Mammary epithelial cell (primary cell): ENCODE measurements at regions of chr18 and their contacts with region 1.

Region 1: DNA sequence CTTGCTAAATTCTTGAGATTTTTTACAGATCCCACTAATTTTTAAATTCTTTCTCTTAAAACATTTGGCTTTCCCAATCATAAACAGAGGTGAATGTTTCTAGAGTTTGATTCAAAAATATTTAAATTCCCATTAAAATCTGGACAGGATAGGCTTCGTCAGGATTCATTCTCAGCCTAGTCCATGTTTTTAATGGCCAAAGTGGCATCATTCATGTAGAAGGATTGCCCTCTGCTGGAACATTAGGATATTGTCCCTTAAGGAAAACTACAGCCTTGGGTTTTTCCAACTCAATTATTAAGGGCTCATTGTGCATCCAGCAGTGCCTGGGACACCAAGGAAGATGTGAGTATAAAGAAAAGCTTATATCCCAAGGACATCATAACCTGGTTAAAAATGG is 71.7 kb downstream of the TPGS2 start:
- DNase-seq: peak; percentile 40
- H3K4me3 ChIP-seq: no peak overlapping the region
- H3K27ac ChIP-seq: no peak overlapping the region
- H3K4me1 ChIP-seq: peaks cover 7% of the 10 kb centered on the region
- H3K27me3 ChIP-seq: no peaks in the 10 kb centered on the region
- CTCF ChIP-seq: peak; percentile 63 to 73

Region 2: DNA sequence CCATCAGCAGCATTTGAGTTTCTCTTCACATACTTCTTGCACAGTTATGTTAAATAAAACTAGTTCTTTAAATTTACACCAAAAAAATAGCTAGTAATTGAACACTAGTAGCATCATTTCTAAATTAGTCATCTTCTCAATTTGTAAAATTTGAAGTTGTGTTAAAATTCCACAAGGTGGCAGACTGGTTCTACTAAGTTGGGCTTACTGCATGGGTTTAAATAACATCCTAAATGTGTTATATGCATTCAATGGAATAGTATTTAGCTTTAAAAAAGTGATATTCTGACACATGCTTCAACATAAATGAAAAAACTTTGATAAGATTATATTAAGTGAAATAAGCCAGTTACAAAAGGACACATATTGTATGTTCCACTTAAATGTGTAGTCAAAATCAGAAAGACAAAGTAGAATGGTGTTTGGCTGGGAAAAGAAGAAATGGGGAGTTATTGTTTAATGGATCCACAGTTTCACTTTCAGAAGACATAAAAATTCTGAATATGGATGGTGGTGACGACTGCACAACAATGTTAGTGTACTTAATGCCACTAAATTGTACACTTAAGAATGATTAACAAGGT is 661.1 kb before region 1 on chr18:
- CTCF ChIA-PET with region 1: no interaction called
- dilution Hi-C with region 1: no loop called
- in situ Hi-C with region 1: no loop called
- intact Hi-C with region 1: loop called (anchors 10 kb)
- DNase-seq: peak; percentile 56
- H3K4me3 ChIP-seq: no peak overlapping the region
- H3K27ac ChIP-seq: no peak overlapping the region
- H3K4me1 ChIP-seq: no peaks in the 10 kb centered on the region
- H3K27me3 ChIP-seq: no peaks in the 10 kb centered on the region
- CTCF ChIP-seq: peak; percentile 47 to 58

Region 3: DNA sequence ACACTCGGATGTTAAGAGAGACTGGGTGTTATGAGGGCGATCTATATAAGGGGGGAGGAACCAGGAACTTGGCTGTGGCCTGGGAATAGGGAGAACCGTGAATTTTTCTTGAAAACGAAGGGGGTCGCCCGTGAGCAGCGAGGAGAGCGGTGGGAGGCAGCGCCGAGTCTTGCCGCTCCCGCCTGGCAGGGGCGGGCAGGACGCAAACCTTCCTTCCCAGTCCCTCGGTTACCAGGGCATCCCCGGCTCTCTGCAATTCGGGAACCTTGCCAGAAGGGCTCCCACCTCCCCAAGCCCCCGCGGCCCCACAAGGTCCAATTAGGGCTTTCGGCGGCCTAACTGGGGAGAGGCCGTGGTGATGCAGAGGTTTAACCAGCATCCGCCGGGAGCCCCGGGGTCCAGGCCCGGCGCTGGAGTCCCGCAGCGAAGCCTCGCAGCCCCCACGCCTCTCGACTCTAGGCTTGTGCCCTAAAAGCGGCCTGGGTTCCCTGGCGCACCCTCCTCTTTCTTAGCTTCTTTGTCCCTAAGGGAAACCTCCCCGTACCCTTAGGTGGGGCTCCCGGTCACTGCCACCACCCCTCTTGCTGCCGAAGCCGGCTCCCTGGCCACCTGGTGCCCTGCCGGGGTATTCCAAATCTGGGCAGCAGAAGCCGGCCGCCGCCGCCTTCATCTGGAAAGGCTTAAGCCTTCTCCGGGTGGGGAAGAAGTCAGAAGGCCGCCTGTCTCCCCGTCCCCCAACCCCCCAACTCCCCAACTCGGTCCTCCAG is 460.2 kb before region 1 on chr18:
- CTCF ChIA-PET with region 1: no interaction called
- dilution Hi-C with region 1: no loop called
- in situ Hi-C with region 1: no loop called
- intact Hi-C with region 1: loop called (anchors 5 kb)
- DNase-seq: peak; percentile 57
- H3K4me3 ChIP-seq: peak overlapping the region; percentile 47 to 78 (median 78)
- H3K27ac ChIP-seq: peak overlapping the region; percentile 26
- H3K4me1 ChIP-seq: peaks cover 31% of the 10 kb centered on the region
- H3K27me3 ChIP-seq: no peaks in the 10 kb centered on the region
- CTCF ChIP-seq: peak in 1 of 2 donors; percentile 41

Region 4: GRCh38 chr18:36580266-36580665 is 176.8 kb before region 1 on chr18:
- CTCF ChIA-PET with region 1: no interaction called
- dilution Hi-C with region 1: no loop called
- in situ Hi-C with region 1: no loop called
- intact Hi-C with region 1: loop called (anchors 10 kb)
- DNase-seq: peak; percentile 48
- H3K4me3 ChIP-seq: no peak overlapping the region
- H3K27ac ChIP-seq: peak overlapping the region; percentile 87
- H3K4me1 ChIP-seq: peaks cover 44% of the 10 kb centered on the region
- H3K27me3 ChIP-seq: no peaks in the 10 kb centered on the region
- CTCF ChIP-seq: peak; percentile 3 to 41

Region 5: DNA sequence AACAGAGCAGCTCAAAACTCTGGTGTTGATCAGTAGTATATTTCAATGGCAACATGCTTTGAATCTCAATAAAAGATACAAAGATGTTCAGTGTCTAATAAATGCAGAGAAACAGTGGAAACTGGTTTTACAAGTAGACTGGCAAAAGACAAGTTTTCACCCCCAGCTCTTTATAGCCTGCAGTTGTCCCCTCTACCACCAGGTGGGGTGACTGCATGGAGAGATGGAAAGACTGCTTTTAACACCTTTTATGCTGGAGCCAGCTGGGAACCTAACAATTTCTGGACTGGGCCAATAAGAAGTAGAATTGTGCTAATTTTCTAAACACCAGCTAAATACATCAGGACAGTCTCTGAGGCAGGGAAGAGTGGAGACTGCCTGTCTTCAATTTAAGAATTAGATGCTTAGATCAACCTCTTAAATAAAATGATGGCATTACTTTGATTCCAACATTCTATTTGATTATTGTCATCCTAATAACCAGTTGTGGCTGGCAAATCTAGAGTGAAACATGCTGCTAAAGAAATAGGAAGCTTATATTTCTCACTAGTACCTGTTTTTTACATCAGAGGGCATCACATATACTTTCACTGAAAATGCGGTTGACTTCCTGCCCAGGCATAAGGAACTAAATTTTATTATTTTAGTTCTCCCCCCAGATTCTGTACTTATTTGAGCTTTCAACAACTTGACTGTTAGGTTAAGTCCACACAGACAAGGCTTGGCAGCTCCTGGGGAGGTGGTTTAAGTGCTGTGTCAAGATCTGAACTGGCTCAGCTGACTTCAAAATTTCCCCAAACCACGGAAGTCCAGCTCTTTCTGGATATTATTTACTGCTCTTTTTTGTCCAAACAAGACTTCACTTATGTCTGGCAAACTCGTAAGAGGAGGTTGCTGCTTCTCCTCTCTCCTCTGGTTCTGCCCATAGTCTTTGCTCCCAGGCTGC is 68.8 kb before region 1 on chr18:
- CTCF ChIA-PET with region 1: no interaction called
- dilution Hi-C with region 1: loop called (anchors 10 kb)
- in situ Hi-C with region 1: loop called in 1 of 2 experiments (anchors 10 kb)
- intact Hi-C with region 1: loop called (anchors 1 kb)
- DNase-seq: peak; percentile 60
- H3K4me3 ChIP-seq: no peak overlapping the region
- H3K27ac ChIP-seq: no peak overlapping the region
- H3K4me1 ChIP-seq: no peaks in the 10 kb centered on the region
- H3K27me3 ChIP-seq: no peaks in the 10 kb centered on the region
- CTCF ChIP-seq: peak; percentile 82 to 97

Region 6: DNA sequence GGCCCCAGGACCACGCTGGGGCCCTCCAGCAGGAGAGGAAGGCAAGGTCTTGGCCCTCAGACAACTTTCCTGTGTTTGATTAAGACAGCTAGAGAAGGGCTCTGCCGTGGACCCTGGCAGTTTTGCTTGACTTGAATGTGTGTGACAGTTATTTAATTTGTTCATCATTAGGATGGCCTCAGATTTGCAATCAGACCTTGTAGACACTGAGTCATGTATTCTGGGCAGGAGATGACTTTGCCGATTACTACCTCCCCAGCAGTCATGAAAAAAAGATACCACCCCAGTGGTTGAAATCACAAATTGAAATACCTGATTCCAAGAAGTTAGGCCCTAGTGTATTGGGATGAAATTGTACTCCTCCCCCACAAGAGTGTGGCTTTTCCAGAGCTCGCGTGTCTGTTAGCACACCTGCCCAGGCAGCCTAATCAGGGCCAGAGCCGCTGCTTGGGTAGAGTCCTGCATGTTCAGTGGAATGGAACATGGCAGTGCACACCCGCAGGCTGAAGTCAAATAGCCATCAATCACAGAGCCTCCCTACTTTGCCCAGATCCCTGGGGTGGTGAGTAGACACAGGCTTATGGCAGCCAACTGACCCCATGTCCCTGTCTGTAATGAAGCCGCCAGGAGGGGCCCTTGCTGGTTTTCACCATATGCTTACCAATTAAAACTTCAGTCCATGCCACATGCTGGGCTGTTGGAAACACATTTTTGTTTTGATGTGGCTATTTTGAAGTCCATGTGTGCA is 50.8 kb before region 1 on chr18:
- CTCF ChIA-PET with region 1: no interaction called
- dilution Hi-C with region 1: no loop called
- in situ Hi-C with region 1: no loop called
- intact Hi-C with region 1: no loop called
- DNase-seq: no peak
- H3K4me3 ChIP-seq: no peak overlapping the region
- H3K27ac ChIP-seq: no peak overlapping the region
- H3K4me1 ChIP-seq: peaks cover 1% of the 10 kb centered on the region
- H3K27me3 ChIP-seq: no peaks in the 10 kb centered on the region
- CTCF ChIP-seq: no peak